Endothelial cell of umbilical vein (primary cell): ENCODE measurements at regions of chr10 and their contacts with region 1.

Region 1: DNA sequence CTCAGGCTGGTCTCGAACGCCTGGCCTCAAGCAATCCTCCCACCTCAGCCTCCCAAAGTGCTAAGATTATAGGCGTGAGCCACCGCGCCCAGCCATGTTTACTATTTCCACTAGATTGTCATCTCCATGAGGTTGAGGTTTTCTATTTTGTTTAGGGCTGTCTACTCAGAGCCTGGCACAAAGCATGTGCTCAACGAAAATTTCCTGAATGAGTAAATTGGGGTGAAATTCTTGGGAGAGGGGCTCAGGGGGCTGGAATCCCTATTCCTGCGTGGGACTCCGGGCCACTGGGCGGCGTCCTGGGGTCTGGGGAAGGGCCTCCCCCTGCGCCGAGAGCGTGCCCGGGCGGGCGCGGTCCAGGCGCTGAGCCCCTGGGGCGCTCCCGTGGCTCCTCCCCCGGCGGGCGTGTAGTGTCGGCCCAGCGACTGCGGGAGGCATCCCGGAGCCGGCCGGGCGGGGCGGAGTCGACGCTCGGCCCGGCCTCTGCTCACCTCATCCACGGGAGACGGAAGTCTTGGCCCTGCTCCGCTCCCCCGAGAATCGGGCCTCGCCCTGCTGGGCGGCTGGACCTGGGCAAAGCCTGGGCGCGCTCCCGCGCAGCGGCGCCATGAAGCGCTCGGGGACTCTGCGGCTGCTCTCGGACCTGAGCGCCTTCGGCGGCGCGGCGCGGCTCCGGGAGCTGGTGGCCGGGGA is at the start of gene HPS6:
- DNase-seq: peak; percentile 90
- H3K4me3 ChIP-seq: peak within 1 kb of the TSS; percentile 42 to 89 (median 62)
- H3K27ac ChIP-seq: peak within 1 kb of the TSS; percentile 43
- H3K4me1 ChIP-seq: peaks cover 14% of the 10 kb centered on the region
- H3K27me3 ChIP-seq: no peaks in the 10 kb centered on the region
- CTCF ChIP-seq: peak in 1 of 2 donors; percentile 20
- POLR2A ChIP-seq: peak; percentile 94
- total RNA-seq, gene HPS6: 18.5 TPM in 2 replicates

Region 2: DNA sequence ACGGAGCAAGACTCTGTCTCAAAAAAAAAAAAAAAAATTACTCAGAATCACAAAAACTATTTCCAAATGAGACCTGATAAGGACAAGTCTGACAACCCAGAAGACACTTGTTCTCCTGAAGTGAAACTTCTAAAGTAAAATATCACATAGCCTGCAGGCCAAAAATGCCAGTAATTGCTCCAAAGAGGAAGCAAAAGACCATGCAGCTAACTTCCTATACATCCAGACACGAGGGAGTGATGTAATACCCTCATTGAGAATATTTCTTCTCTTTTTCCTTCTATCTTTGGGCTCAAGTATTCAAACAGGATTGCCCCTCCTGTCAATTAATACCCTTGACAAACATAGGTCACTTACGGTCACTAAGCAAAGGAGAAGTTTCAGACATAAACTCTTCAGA is 40.2 kb before region 1 on chr10:
- CTCF ChIA-PET with region 1: no interaction called
- POLR2A ChIA-PET with region 1: interaction called, 11 read pairs
- dilution Hi-C with region 1: no loop called
- intact Hi-C with region 1: no loop called
- DNase-seq: no peak
- H3K4me3 ChIP-seq: no peak overlapping the region
- H3K27ac ChIP-seq: no peak overlapping the region
- H3K4me1 ChIP-seq: no peaks in the 10 kb centered on the region
- H3K27me3 ChIP-seq: no peaks in the 10 kb centered on the region
- CTCF ChIP-seq: no peak
- POLR2A ChIP-seq: no peak